ENCODE measurements at regions of chr1 and their contacts with region 1.

Region 1: GRCh38 chr1:150925816-150926741 is at the start of gene SETDB1:
- DNase-seq: peak; percentile 92
- CTCF ChIP-seq: peak; percentile 23

Region 2: GRCh38 chr1:150875207-150876118 is 50.6 kb before region 1 on chr1:
- CTCF ChIA-PET with region 1: interaction called, 14 read pairs
- POLR2A ChIA-PET with region 1: no interaction called
- DNase-seq: no peak
- CTCF ChIP-seq: no peak

Region 3: GRCh38 chr1:150881331-150882070 is 44.6 kb before region 1 on chr1:
- CTCF ChIA-PET with region 1: interaction called, 16 read pairs
- POLR2A ChIA-PET with region 1: no interaction called
- DNase-seq: no peak
- CTCF ChIP-seq: no peak

Region 4: DNA sequence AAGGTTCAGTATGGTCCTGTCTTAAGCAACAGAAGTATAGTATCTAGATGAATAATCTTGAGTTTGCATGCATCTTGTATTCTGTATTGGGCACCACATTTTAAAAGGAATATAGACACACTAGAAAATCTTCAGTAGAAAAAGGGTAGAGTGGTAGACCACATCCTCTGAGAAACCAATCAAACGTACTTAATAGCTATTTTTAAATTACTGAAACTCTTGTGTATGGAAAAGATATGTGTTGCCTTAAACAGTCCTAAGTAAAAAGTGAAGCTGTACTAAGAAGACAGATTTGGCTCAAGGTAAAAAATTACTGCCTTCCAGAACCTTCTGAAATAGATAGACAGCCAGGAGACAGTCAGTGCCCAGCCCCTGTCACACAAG is 36.1 kb before region 1 on chr1:
- CTCF ChIA-PET with region 1: interaction called, 19 read pairs
- POLR2A ChIA-PET with region 1: no interaction called
- DNase-seq: no peak
- CTCF ChIP-seq: no peak

Region 5: DNA sequence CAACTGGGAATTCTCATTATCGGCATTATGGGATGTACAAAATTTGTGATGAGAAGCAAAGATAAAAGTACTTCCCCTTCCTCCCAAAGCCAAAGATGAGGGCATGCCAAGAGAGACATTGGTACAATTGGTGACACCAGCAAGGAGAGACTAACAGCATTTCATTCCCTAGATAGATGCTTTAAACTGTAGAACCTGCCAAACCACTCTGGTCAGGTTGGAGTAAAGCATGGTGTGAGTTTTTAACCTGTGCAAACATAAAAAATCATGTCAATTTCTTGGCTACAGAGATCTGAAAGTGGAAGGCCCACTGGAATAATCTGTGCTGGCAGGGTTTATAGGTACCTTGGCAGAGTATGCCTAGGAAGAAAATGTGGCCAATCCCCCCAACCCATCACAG is 19.7 kb before region 1 on chr1:
- CTCF ChIA-PET with region 1: interaction called, 44 read pairs
- POLR2A ChIA-PET with region 1: no interaction called
- DNase-seq: no peak
- CTCF ChIP-seq: no peak

Region 6: DNA sequence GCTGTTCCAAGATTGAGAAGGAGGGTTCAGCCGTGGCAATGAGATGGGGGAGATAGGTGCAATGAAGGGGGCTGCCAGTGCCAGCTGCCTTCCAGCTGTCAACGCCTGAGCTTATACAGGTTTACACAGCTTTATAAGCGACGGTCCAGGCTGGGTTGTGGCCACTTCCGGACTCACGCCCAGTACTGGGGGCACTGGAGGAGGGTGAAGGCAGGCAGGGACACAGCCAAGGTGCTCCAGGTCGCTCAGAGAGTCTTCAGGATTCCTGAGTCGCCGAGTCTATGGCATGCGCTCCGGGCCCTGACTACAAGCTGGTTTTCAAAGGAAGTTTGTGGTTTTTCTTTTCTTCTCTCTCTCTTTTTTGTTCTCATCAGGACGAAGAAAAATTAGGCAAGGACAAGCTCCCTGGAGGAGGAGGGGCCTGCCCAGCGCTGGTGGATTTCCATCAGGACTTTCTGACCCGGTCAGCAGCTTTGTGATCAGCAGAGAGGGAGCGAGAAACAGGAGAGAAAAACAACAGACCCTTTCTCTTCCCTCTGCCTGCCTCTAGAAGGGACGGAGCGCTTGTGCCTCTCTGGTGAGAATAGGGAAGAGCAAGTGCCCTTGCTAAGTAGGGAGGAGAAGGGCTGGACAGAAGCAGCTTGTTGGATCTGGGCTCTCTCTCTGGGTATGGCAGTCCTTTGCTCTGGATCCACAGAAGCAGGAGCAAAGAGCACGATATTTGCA is 80.4 kb after region 1 on chr1 and contains the start of gene MINDY1:
- CTCF ChIA-PET with region 1: interaction called, 3 read pairs
- POLR2A ChIA-PET with region 1: interaction called, 16 read pairs
- DNase-seq: peak; percentile 71
- CTCF ChIP-seq: peak; percentile 28